ENCODE measurements at regions of chr2 and their contacts with region 1.

Region 1: GRCh38 chr2:206556357-206556949 is 85.8 kb upstream of the FAM237A start:
- DNase-seq: peak; percentile 42
- ATAC-seq: peak; percentile 66; the same call in 1 of the 2 replicates
- H3K4me3 ChIP-seq: no peak overlapping the region
- H3K27ac ChIP-seq: no peak overlapping the region
- H3K4me1 ChIP-seq: no peaks in the 10 kb centered on the region
- H3K27me3 ChIP-seq: peaks cover 2% of the 10 kb centered on the region; the same call in 1 of the 2 replicates
- CTCF ChIP-seq: peak; percentile 69; the same call in 1 of the 2 replicates

Region 2: DNA sequence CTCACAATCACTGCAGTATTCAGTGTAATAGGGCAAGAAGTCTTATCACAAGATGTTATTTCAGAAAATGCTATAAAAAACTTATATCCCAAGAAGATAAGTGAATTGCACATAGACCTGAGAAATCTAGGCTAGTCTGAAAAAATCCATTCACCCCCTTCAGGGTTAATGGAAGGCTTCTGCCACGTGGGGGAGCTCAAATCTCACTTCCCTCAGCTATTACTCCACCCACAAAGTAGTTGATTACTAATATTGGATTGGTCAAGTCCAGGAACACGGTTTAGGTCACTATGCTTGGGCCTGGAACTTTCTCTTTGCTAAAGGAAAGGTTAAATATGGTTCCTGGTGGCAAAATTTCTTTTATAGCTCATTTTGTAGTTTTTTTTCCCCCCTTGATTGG is 164.3 kb before region 1 on chr2:
- CTCF ChIA-PET with region 1: no interaction called
- POLR2A ChIA-PET with region 1: no interaction called
- in situ Hi-C with region 1: no loop called
- intact Hi-C with region 1: loop called (anchors 10 kb)
- DNase-seq: no peak
- ATAC-seq: no peak
- H3K4me3 ChIP-seq: no peak overlapping the region
- H3K27ac ChIP-seq: no peak overlapping the region
- H3K4me1 ChIP-seq: no peaks in the 10 kb centered on the region
- H3K27me3 ChIP-seq: no peaks in the 10 kb centered on the region
- CTCF ChIP-seq: peak; percentile 68

Region 3: GRCh38 chr2:206502729-206503128 is 53.7 kb before region 1 on chr2:
- CTCF ChIA-PET with region 1: no interaction called
- POLR2A ChIA-PET with region 1: no interaction called
- in situ Hi-C with region 1: no loop called
- intact Hi-C with region 1: no loop called
- DNase-seq: no peak
- ATAC-seq: no peak
- H3K4me3 ChIP-seq: no peak overlapping the region
- H3K27ac ChIP-seq: no peak overlapping the region
- H3K4me1 ChIP-seq: no peaks in the 10 kb centered on the region
- H3K27me3 ChIP-seq: no peaks in the 10 kb centered on the region
- CTCF ChIP-seq: peak; percentile 5; the same call in 1 of the 2 replicates

Region 4: DNA sequence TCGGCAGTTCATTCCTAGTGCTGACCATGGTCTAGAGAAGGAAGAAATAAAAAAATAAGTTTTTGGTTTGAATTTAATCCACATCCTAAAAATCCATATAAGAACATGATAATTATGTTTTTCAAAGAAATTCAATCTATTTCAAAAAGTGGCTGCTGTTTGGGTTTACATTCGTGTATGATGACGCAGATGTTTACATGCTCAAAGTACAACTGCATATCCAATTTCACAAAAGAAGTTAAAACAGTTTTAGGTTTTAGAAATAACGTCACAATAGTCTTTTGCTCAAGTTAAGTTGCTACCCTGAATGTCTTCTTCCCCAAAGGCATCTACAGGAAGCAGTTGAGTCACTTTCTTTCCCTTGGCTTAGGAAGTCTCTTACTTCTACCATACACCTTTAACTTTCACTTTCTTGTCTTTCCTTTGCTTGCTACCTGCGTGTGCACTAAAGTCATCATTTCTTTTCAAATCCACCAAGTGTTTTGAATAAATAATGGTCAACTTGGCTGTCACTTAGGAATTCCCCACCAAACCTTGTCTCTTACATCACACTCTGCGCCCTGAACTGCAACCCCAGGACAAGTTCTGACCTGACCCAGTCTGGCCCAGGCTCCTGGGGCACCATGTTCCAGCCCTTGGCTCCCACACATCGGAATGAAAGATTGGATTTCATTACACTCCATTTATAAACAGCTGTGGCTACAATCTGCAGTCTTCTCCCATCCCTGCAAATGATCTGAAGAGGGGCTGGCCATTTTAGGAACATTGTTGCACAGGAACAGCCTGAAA is 114.3 kb after region 1 on chr2:
- CTCF ChIA-PET with region 1: no interaction called
- POLR2A ChIA-PET with region 1: no interaction called
- in situ Hi-C with region 1: no loop called
- intact Hi-C with region 1: loop called (anchors 10 kb)
- DNase-seq: no peak
- ATAC-seq: no peak
- H3K4me3 ChIP-seq: no peak overlapping the region
- H3K27ac ChIP-seq: no peak overlapping the region
- H3K4me1 ChIP-seq: no peaks in the 10 kb centered on the region
- H3K27me3 ChIP-seq: no peaks in the 10 kb centered on the region; the same call in none of the 2 replicates
- CTCF ChIP-seq: no peak